Dorsolateral prefrontal cortex (tissue), 120 donors: ENCODE measurements at regions of chr2 and their contacts with region 1.

Region 1: DNA sequence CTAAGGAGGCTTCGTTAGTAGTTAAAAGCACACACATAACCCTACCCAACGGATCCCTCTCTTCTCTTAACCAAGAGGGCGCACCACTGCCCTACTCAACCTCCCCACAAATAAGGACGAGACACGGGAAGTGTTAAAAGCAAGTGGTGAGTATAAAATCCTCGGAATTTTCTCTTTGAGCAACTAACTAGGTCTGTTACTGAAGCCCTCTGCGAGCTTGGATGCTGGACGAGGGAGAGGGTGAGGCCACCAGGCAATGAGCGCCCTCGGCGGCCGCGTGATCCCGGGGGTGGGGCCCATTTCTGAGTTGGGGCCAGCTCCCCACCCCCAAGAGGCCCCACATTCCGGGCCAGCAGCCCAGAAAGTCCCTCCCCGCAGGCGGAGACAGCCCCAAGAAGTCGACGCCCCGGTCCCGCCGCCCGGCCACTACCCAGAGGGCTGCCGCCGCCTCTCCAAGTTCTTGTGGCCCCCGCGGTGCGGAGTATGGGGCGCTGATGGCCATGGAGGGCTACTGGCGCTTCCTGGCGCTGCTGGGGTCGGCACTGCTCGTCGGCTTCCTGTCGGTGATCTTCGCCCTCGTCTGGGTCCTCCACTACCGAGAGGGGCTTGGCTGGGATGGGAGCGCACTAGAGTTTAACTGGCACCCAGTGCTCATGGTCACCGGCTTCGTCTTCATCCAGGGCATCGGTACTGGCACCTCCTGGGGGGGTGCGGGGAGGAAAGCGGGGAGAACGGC is at the start of gene CYBRD1:
- DNase-seq: peak; percentile 34 to 90 (median 81)
- H3K4me3 ChIP-seq: peak within 1 kb of the TSS; percentile 57 to 92 (median 77)
- H3K27ac ChIP-seq: peak within 1 kb of the TSS; percentile 3 to 97 (median 91)
- H3K27me3 ChIP-seq: peaks cover 0 to 18% (median 0%) of the 10 kb centered on the region in 45 donors
- CTCF ChIP-seq: peak in 19 of 56 donors; percentile 2 to 48 (median 20)
- total RNA-seq, gene CYBRD1: 14.0 to 100 (median 38.9) TPM

Region 2: GRCh38 chr2:171433763-171434670 is 88.2 kb before region 1 on chr2 and contains the starts of genes DCAF17 and METTL8:
- intact Hi-C with region 1: loop called (anchors 1 to 2 kb)
- DNase-seq: peak; percentile 91 to 98 (median 96)
- H3K4me3 ChIP-seq: peak within 1 kb of the TSS; percentile 67 to 99 (median 88)
- H3K27ac ChIP-seq: peak within 1 kb of the TSS; percentile 80 to 99 (median 96)
- H3K27me3 ChIP-seq: no peaks in the 10 kb centered on the region
- CTCF ChIP-seq: peak; percentile 18 to 81 (median 62)
- total RNA-seq, gene DCAF17: 15.9 to 42.0 (median 28.0) TPM
- total RNA-seq, gene METTL8: 14.3 to 33.4 (median 21.6) TPM